Caco-2 (cell line): ENCODE measurements at regions of chr1 and their contacts with region 1.

Region 1: DNA sequence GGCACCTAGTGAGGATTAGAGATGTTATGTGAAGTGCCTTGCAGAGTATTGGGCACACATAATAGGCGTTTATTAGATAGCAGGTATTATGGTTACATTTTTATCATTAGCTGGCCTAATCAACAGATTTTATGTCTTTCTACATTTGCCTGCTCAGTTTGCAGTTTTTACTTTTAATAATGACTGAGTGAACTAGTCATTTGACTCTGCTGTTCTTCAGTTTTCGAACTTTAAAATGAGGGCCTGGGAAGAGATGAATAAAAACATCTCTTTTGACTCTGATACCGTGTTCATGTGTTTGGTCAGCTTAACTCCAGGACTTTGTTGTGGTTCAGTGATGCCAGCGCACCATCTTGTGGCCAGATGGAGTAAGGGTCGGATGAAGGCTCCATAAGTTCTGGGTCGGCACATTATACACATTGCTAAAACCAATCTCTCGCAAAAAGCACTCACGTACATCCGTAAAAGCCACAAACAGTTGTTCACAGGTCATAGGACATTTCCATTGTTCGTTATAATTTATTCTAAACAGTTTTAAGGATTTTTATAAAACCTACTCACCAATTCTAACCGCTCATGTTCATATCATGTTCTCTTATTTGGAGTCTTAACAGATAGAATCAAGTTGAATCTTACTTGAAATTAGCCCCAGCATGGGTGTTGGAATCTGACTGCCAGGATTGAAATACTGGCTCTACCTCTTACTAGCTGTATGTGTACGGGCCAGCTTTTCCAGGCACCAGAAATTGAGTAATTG is 78.4 kb upstream of the GPR88 start:
- DNase-seq: peak; percentile 44 to 59
- H3K4me3 ChIP-seq: no peak overlapping the region
- H3K4me3 Mint-ChIP-seq: no peak overlapping the region
- H3K27ac Mint-ChIP-seq: peak overlapping the region; percentile 58
- H3K4me1 ChIP-seq: no peaks in the 10 kb centered on the region
- H3K4me1 Mint-ChIP-seq: no peaks in the 10 kb centered on the region
- H3K27me3 ChIP-seq: no peaks in the 10 kb centered on the region
- H3K27me3 Mint-ChIP-seq: no peaks in the 10 kb centered on the region
- CTCF ChIP-seq: peak; percentile 53 to 72

Region 2: DNA sequence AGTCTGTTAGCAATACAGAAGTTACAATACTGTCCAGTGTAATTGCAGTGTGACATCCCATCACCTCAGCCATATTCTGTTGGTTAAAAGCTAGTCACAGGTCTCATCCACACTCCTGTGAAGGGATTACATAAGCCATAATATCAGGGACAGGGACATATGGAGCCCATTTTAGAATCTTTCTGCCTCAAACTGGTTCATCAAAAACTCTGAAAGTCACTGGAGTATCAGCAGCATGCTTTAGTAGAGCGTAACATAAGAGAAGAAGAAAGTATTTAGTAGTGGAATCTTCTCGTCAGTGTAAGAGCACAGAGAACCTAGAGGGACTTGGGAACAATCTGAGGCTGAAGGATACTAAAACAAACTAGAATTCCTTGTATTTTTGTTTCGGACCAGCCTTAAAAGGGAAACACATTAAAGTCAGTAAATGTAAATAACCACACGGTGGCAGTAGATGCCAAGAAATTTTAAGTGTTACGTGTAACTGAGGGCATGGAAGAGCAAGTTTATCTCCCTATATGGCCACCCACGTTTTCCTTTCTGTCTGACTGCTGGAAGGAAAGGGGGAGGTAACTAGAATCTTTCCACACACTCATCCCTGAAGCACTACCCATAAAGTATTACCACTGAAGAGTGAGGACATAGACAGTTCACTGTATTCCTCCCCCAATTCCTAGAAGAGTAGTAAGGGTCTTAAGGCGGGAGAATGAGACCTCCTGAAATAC is 651.0 kb before region 1 on chr1:
- CTCF ChIA-PET with region 1: no interaction called
- POLR2A ChIA-PET with region 1: no interaction called
- intact Hi-C with region 1: loop called (anchors 1 kb)
- DNase-seq: peak; percentile 49 to 58
- H3K4me3 ChIP-seq: no peak overlapping the region
- H3K4me3 Mint-ChIP-seq: no peak overlapping the region
- H3K27ac Mint-ChIP-seq: no peak overlapping the region
- H3K4me1 ChIP-seq: 0 out of 2 replicates have a peak, but pooled peaks cover 3% of the 10 kb centered on the region
- H3K4me1 Mint-ChIP-seq: no peaks in the 10 kb centered on the region
- H3K27me3 ChIP-seq: no peaks in the 10 kb centered on the region
- H3K27me3 Mint-ChIP-seq: no peaks in the 10 kb centered on the region
- CTCF ChIP-seq: peak in 1 of 2 experiments; percentile 3

Region 3: DNA sequence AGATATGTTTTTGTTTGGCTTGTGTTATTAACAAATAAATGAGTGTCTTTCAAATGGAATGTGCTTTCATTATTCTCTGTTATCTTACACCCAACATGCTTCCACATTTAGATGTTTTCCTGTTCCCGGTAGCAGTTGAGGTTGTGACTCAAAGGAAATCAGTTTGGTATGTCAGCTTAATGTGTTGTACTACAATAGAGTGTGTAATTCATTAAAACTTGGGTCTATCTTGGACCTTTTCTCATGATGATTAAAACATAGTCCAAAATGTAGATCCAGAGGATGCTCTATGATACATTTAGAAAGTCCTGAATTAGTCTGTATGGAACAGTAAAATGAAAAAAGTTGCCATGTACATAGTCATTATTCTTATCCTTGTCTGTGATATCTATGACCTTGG is 166.8 kb before region 1 on chr1:
- CTCF ChIA-PET with region 1: interaction called, 3 read pairs
- POLR2A ChIA-PET with region 1: no interaction called
- intact Hi-C with region 1: loop called (anchors 10 kb)
- DNase-seq: no peak
- H3K4me3 ChIP-seq: no peak overlapping the region
- H3K4me3 Mint-ChIP-seq: no peak overlapping the region
- H3K27ac Mint-ChIP-seq: no peak overlapping the region
- H3K4me1 ChIP-seq: no peaks in the 10 kb centered on the region
- H3K4me1 Mint-ChIP-seq: no peaks in the 10 kb centered on the region
- H3K27me3 ChIP-seq: no peaks in the 10 kb centered on the region
- H3K27me3 Mint-ChIP-seq: no peaks in the 10 kb centered on the region
- CTCF ChIP-seq: no peak

Region 4: DNA sequence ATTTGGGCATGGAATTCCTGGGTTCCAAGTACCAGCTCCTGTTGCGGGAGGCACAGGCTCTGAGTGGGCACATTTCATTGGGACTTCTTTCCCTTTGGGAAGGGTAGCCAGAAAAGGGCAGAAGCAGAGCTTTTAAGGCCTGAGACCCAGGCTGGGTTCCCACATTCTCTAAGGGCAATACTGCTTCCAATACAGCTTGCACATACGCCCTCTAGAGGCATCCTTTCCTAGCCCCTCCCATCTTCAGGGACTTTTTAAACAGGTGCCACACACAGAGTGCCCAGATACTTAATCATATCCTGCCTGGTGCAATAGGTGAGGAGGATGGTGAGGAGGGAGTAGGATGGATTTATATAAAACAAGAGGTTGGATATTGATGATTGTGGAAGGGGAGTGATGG is 84.1 kb after region 1 on chr1:
- CTCF ChIA-PET with region 1: no interaction called
- POLR2A ChIA-PET with region 1: no interaction called
- intact Hi-C with region 1: loop called (anchors 1 kb)
- DNase-seq: peak in 1 of 2 experiments; percentile 26
- H3K4me3 ChIP-seq: no peak overlapping the region
- H3K4me3 Mint-ChIP-seq: no peak overlapping the region
- H3K27ac Mint-ChIP-seq: no peak overlapping the region
- H3K4me1 ChIP-seq: no peaks in the 10 kb centered on the region
- H3K4me1 Mint-ChIP-seq: no peaks in the 10 kb centered on the region
- H3K27me3 ChIP-seq: no peaks in the 10 kb centered on the region
- H3K27me3 Mint-ChIP-seq: no peaks in the 10 kb centered on the region
- CTCF ChIP-seq: peak in 1 of 2 experiments; percentile 41

Region 5: DNA sequence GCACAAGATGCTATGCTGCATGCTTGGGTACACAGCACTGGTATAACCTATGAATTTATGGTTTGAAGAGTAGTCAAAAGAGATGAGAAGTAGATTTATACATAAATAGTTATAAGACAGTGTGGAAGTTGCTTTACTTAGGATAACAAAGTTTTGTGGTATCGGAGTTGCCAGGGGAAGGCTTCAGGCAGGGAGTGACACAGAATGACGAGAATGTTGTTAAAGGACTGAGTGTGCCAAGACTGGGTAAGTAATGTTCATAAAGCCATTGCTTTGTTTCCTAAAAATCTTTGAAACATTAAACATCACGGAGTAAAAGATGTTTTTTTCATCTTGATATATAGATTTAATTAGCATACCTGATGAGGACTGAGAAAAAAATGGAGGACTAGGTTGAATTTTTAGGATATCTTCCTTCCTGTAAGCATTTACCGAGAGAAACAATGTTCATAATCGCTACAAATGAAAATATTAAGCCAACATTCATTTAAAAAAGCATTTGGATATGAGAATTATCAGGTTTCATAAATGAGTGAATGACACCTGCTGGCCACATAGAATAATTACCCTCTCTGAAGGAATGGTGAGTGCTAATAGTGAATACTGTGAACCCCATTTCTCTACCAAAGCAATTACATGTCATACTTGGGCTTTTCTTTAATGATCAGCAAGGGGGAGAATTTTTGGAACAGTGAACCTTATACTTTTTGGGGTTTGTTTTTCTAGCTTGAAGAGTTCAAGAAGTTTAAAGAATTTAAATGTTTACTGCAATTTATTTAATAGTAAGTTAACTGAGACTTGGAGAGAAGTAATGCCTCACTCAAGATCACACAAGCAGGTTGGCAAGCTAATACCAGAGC is 406.7 kb after region 1 on chr1:
- CTCF ChIA-PET with region 1: interaction called, 6 read pairs
- POLR2A ChIA-PET with region 1: no interaction called
- intact Hi-C with region 1: loop called (anchors 1 kb)
- DNase-seq: no peak
- H3K4me3 ChIP-seq: no peak overlapping the region
- H3K4me3 Mint-ChIP-seq: no peak overlapping the region
- H3K27ac Mint-ChIP-seq: no peak overlapping the region
- H3K4me1 ChIP-seq: no peaks in the 10 kb centered on the region
- H3K4me1 Mint-ChIP-seq: no peaks in the 10 kb centered on the region
- H3K27me3 ChIP-seq: no peaks in the 10 kb centered on the region
- H3K27me3 Mint-ChIP-seq: no peaks in the 10 kb centered on the region
- CTCF ChIP-seq: peak in 1 of 2 experiments; percentile 33